ENCODE measurements at regions of chr4 and their contacts with region 1.

Region 1: DNA sequence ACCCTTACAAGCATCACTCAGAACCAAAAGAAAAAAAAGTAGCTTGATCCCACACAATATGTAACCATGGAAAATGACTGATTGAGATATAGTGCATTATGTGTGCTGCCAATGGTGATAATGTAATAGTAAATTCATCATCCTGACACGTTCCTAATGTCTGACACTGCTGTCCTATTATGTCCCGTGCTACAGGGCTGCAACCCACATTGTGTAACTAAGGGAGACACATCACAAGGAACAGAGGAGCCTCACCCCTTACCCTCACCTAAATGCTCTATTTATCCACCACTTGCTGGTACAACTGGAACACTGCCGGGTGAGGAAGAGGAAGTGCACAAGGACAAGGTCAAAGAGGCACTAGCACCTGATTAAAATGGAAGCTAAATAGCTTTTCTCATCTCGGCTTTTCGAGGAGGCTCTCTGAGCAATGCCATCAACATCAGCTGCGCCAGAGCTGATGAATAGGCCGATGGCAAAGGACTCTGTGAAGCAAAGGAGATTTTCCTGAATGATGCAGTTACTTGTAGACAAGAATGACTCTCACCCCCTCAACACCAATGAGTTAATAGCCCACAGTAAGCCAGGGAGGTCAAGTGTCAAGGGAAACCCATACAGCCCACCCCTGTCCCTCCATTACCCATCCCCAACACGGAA is 181.6 kb downstream of the HNRNPD start:
- DNase-seq: no peak
- ATAC-seq: no peak
- H3K4me3 Mint-ChIP-seq: no peak overlapping the region
- H3K27ac Mint-ChIP-seq: no peak overlapping the region
- H3K4me1 Mint-ChIP-seq: no peaks in the 10 kb centered on the region
- H3K27me3 Mint-ChIP-seq: no peaks in the 10 kb centered on the region
- CTCF ChIP-seq: no peak

Region 2: DNA sequence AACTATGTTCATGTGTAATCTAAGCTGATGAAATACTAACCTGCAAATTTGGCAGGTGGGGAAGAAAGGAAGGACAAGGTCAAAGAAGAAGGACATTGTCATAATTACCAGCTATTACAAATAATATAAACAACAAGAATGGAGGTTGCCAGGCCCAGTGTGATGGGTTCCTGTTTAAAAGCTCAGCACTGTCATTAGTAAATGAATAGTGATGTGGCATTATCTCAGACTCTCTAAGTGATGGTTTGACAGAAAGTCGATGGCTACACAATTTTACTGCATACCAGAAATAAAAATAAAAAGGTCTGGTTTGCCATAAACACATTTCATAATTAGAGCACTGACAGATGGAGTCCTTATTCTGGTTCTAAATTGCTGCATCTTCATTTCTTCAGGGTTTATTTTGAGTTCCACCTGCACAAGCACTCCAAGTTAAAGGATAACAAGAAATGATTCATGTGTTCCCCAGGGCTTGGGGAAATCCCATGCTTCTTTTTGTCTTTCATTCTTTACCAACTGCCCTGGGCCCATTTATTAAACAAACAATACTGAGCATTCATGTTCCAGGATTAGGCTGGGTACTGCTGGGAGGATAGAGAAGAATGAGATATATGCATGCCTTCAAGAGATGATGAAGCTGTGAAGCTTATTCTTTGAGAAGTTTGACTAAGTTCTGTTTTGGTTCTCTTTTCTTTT is 352.6 kb before region 1 on chr4:
- CTCF ChIA-PET with region 1: no interaction called
- POLR2A ChIA-PET with region 1: no interaction called
- intact Hi-C with region 1: no loop called
- DNase-seq: peak; percentile 33
- ATAC-seq: peak; percentile 83
- H3K4me3 Mint-ChIP-seq: no peak overlapping the region
- H3K27ac Mint-ChIP-seq: no peak overlapping the region
- H3K4me1 Mint-ChIP-seq: peaks cover 17% of the 10 kb centered on the region
- H3K27me3 Mint-ChIP-seq: no peaks in the 10 kb centered on the region
- CTCF ChIP-seq: no peak

Region 3: DNA sequence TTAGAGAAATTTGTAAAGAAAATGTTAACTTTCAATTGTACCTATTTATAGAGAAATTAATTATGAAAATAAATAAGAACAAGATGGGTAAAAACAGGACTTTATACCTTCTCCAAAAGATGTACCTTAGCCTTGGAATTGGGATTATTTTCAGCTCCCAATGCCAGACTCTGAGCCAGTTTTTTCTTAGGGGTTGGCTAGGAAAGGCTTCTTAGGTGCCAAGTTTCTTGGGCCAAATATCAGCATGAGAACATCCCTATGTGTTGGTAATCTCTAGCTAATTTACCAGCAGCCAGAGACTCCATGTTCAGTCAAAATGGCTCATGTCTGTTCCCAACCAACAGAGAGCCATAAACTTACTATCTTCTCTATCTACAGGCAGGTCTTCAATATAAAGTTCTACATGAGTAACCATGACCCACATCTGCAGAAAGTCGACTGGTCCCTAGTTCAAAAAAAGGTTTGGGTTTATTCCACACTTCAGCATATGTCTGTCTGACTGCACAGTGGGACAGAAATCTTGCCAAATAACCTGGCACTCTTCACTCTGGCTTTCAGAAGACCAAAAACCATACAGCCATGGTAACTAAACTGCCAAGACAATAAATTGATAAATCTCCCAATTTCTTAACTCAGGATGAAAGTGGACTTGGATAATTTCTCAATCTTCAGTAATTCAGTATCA is 340.0 kb before region 1 on chr4:
- CTCF ChIA-PET with region 1: no interaction called
- POLR2A ChIA-PET with region 1: no interaction called
- intact Hi-C with region 1: loop called (anchors 10 kb)
- DNase-seq: no peak
- ATAC-seq: no peak
- H3K4me3 Mint-ChIP-seq: no peak overlapping the region
- H3K27ac Mint-ChIP-seq: no peak overlapping the region
- H3K4me1 Mint-ChIP-seq: peaks cover 13% of the 10 kb centered on the region
- H3K27me3 Mint-ChIP-seq: peaks cover 6% of the 10 kb centered on the region
- CTCF ChIP-seq: no peak

Region 4: DNA sequence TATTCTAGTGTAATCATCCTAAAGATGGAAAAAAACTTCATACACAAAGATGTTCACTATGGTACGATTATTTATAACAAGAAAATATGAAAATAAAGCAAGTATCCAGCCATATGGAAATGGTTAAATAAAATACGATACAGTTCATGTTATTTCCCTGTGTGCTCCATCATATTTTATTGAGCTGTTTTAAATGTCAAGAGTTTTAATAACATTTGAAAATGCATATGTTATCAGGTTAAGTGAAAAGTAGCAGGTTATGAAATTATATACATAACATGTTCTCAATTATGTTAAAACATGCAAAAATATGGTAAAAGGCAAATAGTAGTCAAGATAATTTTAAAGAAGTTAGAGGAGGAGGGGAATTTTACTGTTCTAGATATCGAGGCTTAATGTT is 10.4 kb before region 1 on chr4:
- CTCF ChIA-PET with region 1: no interaction called
- POLR2A ChIA-PET with region 1: no interaction called
- intact Hi-C with region 1: no loop called
- DNase-seq: no peak
- ATAC-seq: no peak
- H3K4me3 Mint-ChIP-seq: no peak overlapping the region
- H3K27ac Mint-ChIP-seq: no peak overlapping the region
- H3K4me1 Mint-ChIP-seq: no peaks in the 10 kb centered on the region
- H3K27me3 Mint-ChIP-seq: no peaks in the 10 kb centered on the region
- CTCF ChIP-seq: no peak

Measured in activated CD8-positive, alpha-beta T cell treated with anti-CD3 and anti-CD28 coated beads for 36 hours (primary cell).